Breast epithelium (tissue), 4 donors: ENCODE measurements at regions of chr1 and their contacts with region 1.

Region 1: GRCh38 chr1:232477728-232478127 is 152.2 kb downstream of the SIPA1L2 start:
- DNase-seq: no peak
- H3K4me3 ChIP-seq: no peak overlapping the region
- H3K27ac ChIP-seq: no peak overlapping the region
- H3K4me1 ChIP-seq: no peaks in the 10 kb centered on the region
- H3K27me3 ChIP-seq: no peaks in the 10 kb centered on the region
- CTCF ChIP-seq: no peak
- POLR2A ChIP-seq: no peak

Region 2: GRCh38 chr1:230728710-230729392 is 1748.9 kb before region 1 on chr1:
- intact Hi-C with region 1: no loop called
- DNase-seq: no peak
- H3K4me3 ChIP-seq: no peak overlapping the region
- H3K27ac ChIP-seq: peak overlapping the region in 1 of 2 donors; percentile 21
- H3K4me1 ChIP-seq: no peaks in the 10 kb centered on the region
- H3K27me3 ChIP-seq: no peaks in the 10 kb centered on the region
- CTCF ChIP-seq: no peak
- POLR2A ChIP-seq: no peak

Region 3: GRCh38 chr1:231879296-231879695 is 598.4 kb before region 1 on chr1:
- intact Hi-C with region 1: loop called (anchors 5 kb)
- DNase-seq: no peak
- H3K4me3 ChIP-seq: no peak overlapping the region
- H3K27ac ChIP-seq: no peak overlapping the region
- H3K4me1 ChIP-seq: no peaks in the 10 kb centered on the region
- H3K27me3 ChIP-seq: no peaks in the 10 kb centered on the region
- CTCF ChIP-seq: no peak
- POLR2A ChIP-seq: no peak

Region 4: DNA sequence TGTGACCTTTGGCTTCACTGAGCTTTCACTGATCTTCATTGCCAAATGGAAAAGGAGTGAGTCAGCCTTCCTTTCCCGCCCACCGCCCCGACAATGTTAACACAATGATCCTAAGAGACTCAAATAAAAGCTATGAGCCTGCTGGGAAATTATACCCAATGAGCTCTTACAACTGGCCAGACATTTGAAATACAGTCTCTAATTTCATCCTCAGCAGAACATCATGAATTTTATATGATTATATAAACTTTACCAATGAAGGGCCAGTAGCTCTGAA is 100.3 kb before region 1 on chr1:
- intact Hi-C with region 1: no loop called
- DNase-seq: no peak
- H3K4me3 ChIP-seq: no peak overlapping the region
- H3K27ac ChIP-seq: no peak overlapping the region
- H3K4me1 ChIP-seq: peaks cover 0 to 11% of the 10 kb centered on the region in 2 donors
- H3K27me3 ChIP-seq: no peaks in the 10 kb centered on the region
- CTCF ChIP-seq: no peak
- POLR2A ChIP-seq: no peak

Region 5: GRCh38 chr1:232613752-232614381 is 136.1 kb after region 1 on chr1:
- intact Hi-C with region 1: no loop called
- DNase-seq: no peak
- H3K4me3 ChIP-seq: no peak overlapping the region
- H3K27ac ChIP-seq: no peak overlapping the region
- H3K4me1 ChIP-seq: no peaks in the 10 kb centered on the region
- H3K27me3 ChIP-seq: no peaks in the 10 kb centered on the region
- CTCF ChIP-seq: no peak
- POLR2A ChIP-seq: no peak

Region 6: DNA sequence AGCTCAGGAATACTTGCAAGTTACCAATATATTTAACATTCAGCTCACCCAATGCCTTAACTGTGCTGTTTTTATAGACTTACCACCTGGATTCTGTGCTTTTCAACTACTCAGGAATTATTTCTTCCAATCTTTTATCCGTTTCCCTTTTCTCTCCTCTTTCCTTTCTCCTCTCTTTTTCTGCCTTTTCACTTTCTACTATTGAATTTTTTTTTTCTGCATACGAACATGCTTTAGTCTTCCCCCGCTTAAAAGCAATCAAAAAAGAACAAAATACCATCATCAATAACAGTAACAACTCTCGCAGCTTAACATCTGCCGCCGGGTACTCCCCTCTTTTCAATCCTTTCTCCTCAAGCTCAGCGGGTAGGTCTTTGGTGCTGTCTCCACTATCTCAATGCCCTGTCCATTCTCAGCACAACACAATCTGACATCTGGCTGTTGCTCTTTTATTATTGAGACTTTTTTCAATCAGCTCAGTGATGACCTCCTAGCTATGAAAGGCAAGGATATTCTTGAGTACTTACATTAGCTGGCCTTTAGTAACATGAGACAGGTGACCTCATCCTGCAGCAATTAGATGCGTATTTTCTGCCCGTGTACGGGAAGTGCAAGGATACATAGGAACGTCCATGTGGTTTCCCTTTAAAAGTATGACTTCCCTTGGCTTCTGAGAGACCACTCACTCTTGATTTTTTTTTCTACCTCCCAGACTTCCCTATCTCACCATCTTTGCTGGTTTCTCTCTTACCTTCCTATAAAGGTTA is 192.4 kb after region 1 on chr1:
- intact Hi-C with region 1: loop called (anchors 5 kb)
- DNase-seq: no peak
- H3K4me3 ChIP-seq: no peak overlapping the region
- H3K27ac ChIP-seq: no peak overlapping the region
- H3K4me1 ChIP-seq: no peaks in the 10 kb centered on the region
- H3K27me3 ChIP-seq: no peaks in the 10 kb centered on the region
- CTCF ChIP-seq: no peak
- POLR2A ChIP-seq: no peak

Region 7: GRCh38 chr1:232793944-232794343 is 316.2 kb after region 1 on chr1:
- intact Hi-C with region 1: no loop called
- DNase-seq: no peak
- H3K4me3 ChIP-seq: no peak overlapping the region
- H3K27ac ChIP-seq: no peak overlapping the region
- H3K4me1 ChIP-seq: no peaks in the 10 kb centered on the region
- H3K27me3 ChIP-seq: no peaks in the 10 kb centered on the region
- CTCF ChIP-seq: no peak
- POLR2A ChIP-seq: no peak